Activated T-helper 1 cell treated with anti-CD3 and anti-CD28 coated beads, Interleukin-12 subunit alpha, Interleukin-12 subunit beta, Interleukin-2, Interleukin-4 antibody, amounts not matched to agents 30 ng/mL and 10 ng/mL and 1 ng/mL, durations not matched to agents 14 hours and 24 hours and 36 hours (primary cell): ENCODE measurements at regions of chr14 and their contacts with region 1.

Region 1: GRCh38 chr14:71138448-71139293 is 231.4 kb downstream of the PCNX1 start:
- DNase-seq: peak; percentile 34
- H3K4me3 Mint-ChIP-seq: no peak overlapping the region
- H3K27ac Mint-ChIP-seq: peak overlapping the region; percentile 21
- H3K4me1 Mint-ChIP-seq: peaks cover 40% of the 10 kb centered on the region
- H3K27me3 Mint-ChIP-seq: peaks cover 2% of the 10 kb centered on the region

Region 2: GRCh38 chr14:70245026-70245425 is 893.6 kb before region 1 on chr14:
- intact Hi-C with region 1: no loop called
- DNase-seq: no peak
- H3K4me3 Mint-ChIP-seq: no peak overlapping the region
- H3K27ac Mint-ChIP-seq: no peak overlapping the region
- H3K4me1 Mint-ChIP-seq: no peaks in the 10 kb centered on the region
- H3K27me3 Mint-ChIP-seq: peaks cover 13% of the 10 kb centered on the region

Region 3: GRCh38 chr14:71221119-71221518 is 82.4 kb after region 1 on chr14:
- intact Hi-C with region 1: loop called (anchors 1 kb)
- DNase-seq: no peak
- H3K4me3 Mint-ChIP-seq: no peak overlapping the region
- H3K27ac Mint-ChIP-seq: no peak overlapping the region
- H3K4me1 Mint-ChIP-seq: peaks cover 34% of the 10 kb centered on the region
- H3K27me3 Mint-ChIP-seq: peaks cover 3% of the 10 kb centered on the region

Region 4: DNA sequence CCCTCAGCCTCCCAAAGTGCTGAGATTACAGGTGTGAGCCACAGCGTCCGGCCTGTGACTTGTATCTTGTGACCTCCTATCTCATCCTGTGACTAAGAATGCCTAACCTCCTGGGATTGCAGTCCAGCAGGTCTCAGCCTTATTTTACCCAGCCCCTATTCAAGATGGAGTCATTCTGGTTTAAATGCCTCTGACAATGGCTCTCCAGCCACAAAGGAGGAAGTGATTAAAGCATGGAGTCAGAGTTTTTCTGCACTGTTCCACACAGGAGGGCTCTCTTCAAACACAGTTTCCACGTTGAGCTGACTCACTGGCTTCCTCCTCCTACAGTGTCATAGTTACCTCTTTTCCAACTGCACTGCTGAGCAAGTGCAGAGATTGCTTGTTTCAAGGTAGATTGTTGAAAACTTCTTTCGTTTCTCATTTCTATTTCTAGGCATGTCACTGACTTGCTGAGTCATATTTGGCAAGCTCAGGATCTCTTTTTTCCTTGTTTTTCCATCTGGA is 152.3 kb after region 1 on chr14:
- intact Hi-C with region 1: loop called (anchors 1 kb)
- DNase-seq: no peak
- H3K4me3 Mint-ChIP-seq: peak overlapping the region; percentile 6
- H3K27ac Mint-ChIP-seq: peak overlapping the region; percentile 81
- H3K4me1 Mint-ChIP-seq: peaks cover 31% of the 10 kb centered on the region
- H3K27me3 Mint-ChIP-seq: peaks cover 7% of the 10 kb centered on the region

Region 5: DNA sequence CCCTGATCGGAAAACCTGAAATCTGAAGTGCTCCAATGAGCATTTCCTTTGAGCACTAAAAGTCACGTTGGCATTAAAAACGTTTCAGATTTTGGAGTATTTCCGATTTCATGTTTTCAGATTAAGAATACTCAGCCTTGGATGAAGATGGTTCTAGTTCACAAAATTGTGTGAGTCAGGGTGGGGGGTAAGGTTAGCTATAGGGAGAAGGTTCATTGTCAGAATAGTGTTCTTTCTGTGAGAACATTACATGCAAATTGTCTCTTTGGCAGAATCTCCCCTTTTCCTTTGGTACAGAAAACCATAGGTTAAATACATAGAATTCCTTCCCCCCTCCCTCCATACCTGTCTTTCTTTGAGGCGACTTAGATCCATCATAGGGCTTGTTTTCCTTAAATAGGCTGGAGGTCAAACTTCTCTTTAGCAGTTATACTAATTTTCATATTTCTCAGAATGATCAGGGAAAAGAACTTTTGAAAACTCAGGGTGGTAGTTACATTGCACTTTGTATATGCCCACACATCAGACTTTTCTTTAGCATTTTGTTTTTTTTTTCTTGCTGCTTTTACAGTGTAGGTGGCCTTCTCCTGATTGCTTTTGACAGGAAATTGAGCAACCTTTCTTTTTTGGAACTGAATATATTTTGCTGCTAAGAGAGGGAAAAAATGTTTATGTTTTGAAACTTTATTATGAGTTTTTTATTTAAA is 272.1 kb after region 1 on chr14:
- intact Hi-C with region 1: loop called (anchors 1 kb)
- DNase-seq: no peak
- H3K4me3 Mint-ChIP-seq: no peak overlapping the region
- H3K27ac Mint-ChIP-seq: peak overlapping the region; percentile 84
- H3K4me1 Mint-ChIP-seq: peaks cover 62% of the 10 kb centered on the region
- H3K27me3 Mint-ChIP-seq: no peaks in the 10 kb centered on the region

Region 6: GRCh38 chr14:71659161-71659560 is 520.5 kb after region 1 on chr14:
- intact Hi-C with region 1: loop called (anchors 5 kb)
- DNase-seq: no peak
- H3K4me3 Mint-ChIP-seq: no peak overlapping the region
- H3K27ac Mint-ChIP-seq: peak overlapping the region; percentile 22
- H3K4me1 Mint-ChIP-seq: peaks cover 33% of the 10 kb centered on the region
- H3K27me3 Mint-ChIP-seq: no peaks in the 10 kb centered on the region

Region 7: DNA sequence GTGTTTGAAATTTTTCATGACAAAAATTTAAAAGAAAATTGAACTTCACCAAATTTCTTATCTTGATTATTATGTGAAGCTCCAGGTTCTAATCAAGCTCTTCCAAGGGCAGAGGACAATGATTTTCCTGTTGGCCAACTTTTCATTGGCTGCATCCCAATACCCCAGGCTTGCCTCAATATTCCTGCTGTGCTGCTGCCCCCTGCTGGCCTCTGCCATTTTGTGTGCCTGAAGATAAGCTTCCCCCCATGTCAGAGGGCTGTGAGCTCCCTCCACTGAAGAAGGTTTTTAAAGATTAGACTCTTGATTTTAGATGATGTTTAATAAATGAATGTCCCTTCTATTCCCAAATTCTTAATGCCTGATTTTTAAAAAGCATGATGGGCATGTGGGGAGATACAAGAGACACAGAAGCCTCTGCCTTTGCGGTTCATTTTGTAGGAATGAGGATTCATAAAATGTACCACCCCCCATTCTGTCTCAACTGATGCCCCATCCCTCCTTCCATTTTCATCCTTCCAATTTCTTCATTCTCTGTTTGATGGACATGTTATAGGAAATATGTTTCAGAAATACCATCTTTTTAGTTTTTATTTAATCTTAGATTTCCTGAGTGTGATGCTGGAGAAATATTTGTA is 716.8 kb after region 1 on chr14:
- intact Hi-C with region 1: loop called (anchors 10 kb)
- DNase-seq: peak; percentile 24
- H3K4me3 Mint-ChIP-seq: no peak overlapping the region
- H3K27ac Mint-ChIP-seq: no peak overlapping the region
- H3K4me1 Mint-ChIP-seq: peaks cover 14% of the 10 kb centered on the region
- H3K27me3 Mint-ChIP-seq: peaks cover 27% of the 10 kb centered on the region